CD8-positive, alpha-beta T cell (primary cell): ENCODE measurements at regions of chr11 and their contacts with region 1.

Region 1: DNA sequence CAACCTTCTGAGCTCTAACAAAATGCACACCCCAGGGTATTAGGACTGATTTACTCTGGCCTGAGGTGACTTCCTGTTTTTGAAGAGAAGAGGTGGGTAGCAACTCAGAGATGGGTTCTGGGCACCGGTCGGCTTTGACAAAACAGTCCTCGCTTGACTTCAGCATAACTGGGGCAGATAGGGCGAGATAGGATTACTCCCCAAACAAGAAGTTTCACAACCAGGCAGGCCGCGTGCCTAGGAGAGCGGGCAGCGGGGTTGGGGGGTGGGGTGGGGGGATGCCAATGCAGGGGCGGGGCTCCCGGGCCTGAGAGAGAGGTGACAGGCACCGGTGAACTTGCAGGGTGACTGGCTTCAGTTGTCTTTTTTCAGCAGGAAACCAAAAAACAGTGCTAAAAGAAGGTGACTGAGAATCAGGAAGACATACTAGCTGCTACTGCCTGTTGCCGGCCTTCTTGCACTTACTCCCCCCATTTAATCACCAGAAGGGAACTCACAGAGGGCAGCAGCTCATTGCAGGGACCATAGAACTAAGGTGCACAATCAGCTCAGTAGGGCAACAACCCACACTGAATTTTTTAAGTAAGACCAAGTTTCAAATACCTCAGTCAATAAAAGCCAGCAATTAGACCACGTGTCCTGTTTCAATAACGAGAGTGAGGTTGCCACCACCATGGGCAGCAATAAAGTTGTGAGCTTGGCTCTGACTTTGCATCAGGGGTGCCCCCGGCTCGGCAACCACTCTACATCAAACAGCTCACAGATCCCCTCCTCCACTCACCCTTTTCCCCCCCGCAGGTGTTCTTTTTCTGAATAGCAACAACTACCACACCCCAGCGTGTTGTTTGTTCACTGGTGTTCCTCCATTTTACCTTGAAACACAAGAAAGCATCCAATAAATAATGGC is 37.2 kb upstream of the ETS1 start:
- DNase-seq: peak; percentile 51 to 88 (median 67)
- ATAC-seq: peak; percentile 72
- H3K4me3 ChIP-seq: peak overlapping the region; percentile 6 to 18
- H3K4me3 Mint-ChIP-seq: peak overlapping the region; percentile 56
- H3K27ac ChIP-seq: peak overlapping the region; percentile 48 to 83
- H3K27ac Mint-ChIP-seq: peak overlapping the region; percentile 98
- H3K4me1 ChIP-seq: peaks cover 91% of the 10 kb centered on the region
- H3K4me1 Mint-ChIP-seq: peaks cover 99% of the 10 kb centered on the region
- H3K27me3 ChIP-seq: no peaks in the 10 kb centered on the region
- H3K27me3 Mint-ChIP-seq: no peaks in the 10 kb centered on the region
- CTCF ChIP-seq: no peak

Region 2: GRCh38 chr11:128302425-128303186 is 321.9 kb before region 1 on chr11:
- CTCF ChIA-PET with region 1: interaction called, 53 read pairs
- POLR2A ChIA-PET with region 1: interaction called, 11 read pairs
- intact Hi-C with region 1: no loop called
- DNase-seq: peak; percentile 49 to 97 (median 72)
- ATAC-seq: peak; percentile 85
- H3K4me3 ChIP-seq: peak overlapping the region; percentile 46 to 51
- H3K4me3 Mint-ChIP-seq: peak overlapping the region; percentile 88
- H3K27ac ChIP-seq: peak overlapping the region; percentile 87 to 89
- H3K27ac Mint-ChIP-seq: peak overlapping the region; percentile 99
- H3K4me1 ChIP-seq: peaks cover 88% of the 10 kb centered on the region
- H3K4me1 Mint-ChIP-seq: peaks cover 92% of the 10 kb centered on the region
- H3K27me3 ChIP-seq: no peaks in the 10 kb centered on the region
- H3K27me3 Mint-ChIP-seq: no peaks in the 10 kb centered on the region
- CTCF ChIP-seq: no peak

Region 3: DNA sequence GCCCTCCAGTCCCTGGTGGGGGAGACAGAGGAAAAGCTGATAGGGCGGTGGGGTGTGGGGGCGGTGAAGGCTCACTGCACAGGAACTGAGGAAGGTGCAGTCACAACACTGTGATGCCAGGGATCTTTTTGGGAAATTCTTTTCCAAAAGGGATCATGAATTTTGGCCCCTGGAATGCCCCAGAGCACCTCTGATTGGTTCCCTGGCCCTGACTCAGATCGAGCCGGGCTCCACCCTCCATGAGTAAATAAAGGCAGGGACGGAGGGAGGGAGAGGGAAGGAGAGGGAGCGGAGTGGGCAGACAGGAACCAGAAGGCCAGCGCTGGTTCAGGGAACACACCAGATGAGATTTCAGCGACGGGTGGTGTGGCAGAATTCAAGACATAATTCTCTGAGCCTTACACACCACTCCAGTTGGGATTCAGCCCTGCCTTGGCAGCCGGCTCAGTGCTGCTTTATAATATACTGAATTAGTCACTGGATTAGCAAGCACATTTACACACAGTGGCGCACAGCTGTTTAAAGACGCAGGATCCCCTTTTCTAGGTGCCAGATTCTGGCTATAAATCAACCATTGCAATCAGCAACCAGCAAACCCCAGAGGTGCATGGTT is 117.4 kb before region 1 on chr11:
- CTCF ChIA-PET with region 1: interaction called, 140 read pairs
- POLR2A ChIA-PET with region 1: interaction called, 32 read pairs
- intact Hi-C with region 1: no loop called
- DNase-seq: peak in 4 of 9 experiments; percentile 51 to 65 (median 60)
- ATAC-seq: peak; percentile 30
- H3K4me3 ChIP-seq: peak overlapping the region; percentile 37 to 94
- H3K4me3 Mint-ChIP-seq: peak overlapping the region; percentile 84
- H3K27ac ChIP-seq: peak overlapping the region; percentile 48 to 75
- H3K27ac Mint-ChIP-seq: peak overlapping the region; percentile 98
- H3K4me1 ChIP-seq: peaks cover 100% of the 10 kb centered on the region
- H3K4me1 Mint-ChIP-seq: peaks cover 97% of the 10 kb centered on the region
- H3K27me3 ChIP-seq: no peaks in the 10 kb centered on the region
- H3K27me3 Mint-ChIP-seq: no peaks in the 10 kb centered on the region
- CTCF ChIP-seq: no peak

Region 4: GRCh38 chr11:128574576-128575011 is 49.9 kb before region 1 on chr11:
- CTCF ChIA-PET with region 1: no interaction called
- POLR2A ChIA-PET with region 1: interaction called, 5 read pairs
- intact Hi-C with region 1: loop called in 1 of 2 experiments (anchors 5 kb)
- DNase-seq: peak in 1 of 9 experiments; percentile 20
- ATAC-seq: peak; percentile 23
- H3K4me3 ChIP-seq: no peak overlapping the region
- H3K4me3 Mint-ChIP-seq: no peak overlapping the region
- H3K27ac ChIP-seq: no peak overlapping the region
- H3K27ac Mint-ChIP-seq: no peak overlapping the region
- H3K4me1 ChIP-seq: peaks cover 18% of the 10 kb centered on the region
- H3K4me1 Mint-ChIP-seq: peaks cover 28% of the 10 kb centered on the region
- H3K27me3 ChIP-seq: no peaks in the 10 kb centered on the region
- H3K27me3 Mint-ChIP-seq: no peaks in the 10 kb centered on the region
- CTCF ChIP-seq: no peak

Region 5: GRCh38 chr11:128726458-128727139 is 102.1 kb after region 1 on chr11:
- CTCF ChIA-PET with region 1: no interaction called
- POLR2A ChIA-PET with region 1: no interaction called
- intact Hi-C with region 1: no loop called
- DNase-seq: peak in 7 of 9 experiments; percentile 51 to 86 (median 70)
- ATAC-seq: peak; percentile 69
- H3K4me3 ChIP-seq: peak overlapping the region; percentile 7 to 28
- H3K4me3 Mint-ChIP-seq: peak overlapping the region; percentile 87
- H3K27ac ChIP-seq: peak overlapping the region in 1 of 2 experiments; percentile 69
- H3K27ac Mint-ChIP-seq: peak overlapping the region; percentile 89
- H3K4me1 ChIP-seq: peaks cover 99% of the 10 kb centered on the region
- H3K4me1 Mint-ChIP-seq: peaks cover 98% of the 10 kb centered on the region
- H3K27me3 ChIP-seq: no peaks in the 10 kb centered on the region
- H3K27me3 Mint-ChIP-seq: no peaks in the 10 kb centered on the region
- CTCF ChIP-seq: no peak